A673 (cell line): ENCODE measurements at regions of chr1 and their contacts with region 1.

Region 1: DNA sequence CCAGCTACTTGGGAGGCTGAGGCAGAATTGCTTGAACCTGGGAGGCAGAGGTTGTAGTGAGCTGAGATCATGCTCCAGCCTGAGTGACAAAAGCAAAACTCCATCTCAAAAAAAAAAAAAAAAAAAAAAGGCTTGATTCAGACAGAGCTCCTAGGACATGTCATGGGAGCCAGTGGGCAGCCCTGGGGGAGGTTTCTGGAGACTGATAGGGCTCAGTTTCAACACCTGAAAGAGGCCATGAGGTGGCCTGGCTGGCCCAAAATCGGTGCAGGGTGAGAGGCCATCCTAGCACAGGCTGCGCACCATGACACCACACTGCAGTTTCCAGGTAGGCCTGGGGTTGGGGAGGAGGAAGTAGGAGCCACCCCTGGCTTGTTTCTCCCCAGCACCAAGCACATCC is 39.3 kb downstream of the BMP8A start:
- DNase-seq: no peak
- H3K4me3 ChIP-seq: no peak overlapping the region
- H3K27ac ChIP-seq: no peak overlapping the region
- H3K4me1 ChIP-seq: no peaks in the 10 kb centered on the region
- H3K27me3 ChIP-seq: no peaks in the 10 kb centered on the region
- CTCF ChIP-seq: no peak

Region 2: GRCh38 chr1:39940252-39940651 is 409.5 kb after region 1 on chr1:
- CTCF ChIA-PET with region 1: no interaction called
- POLR2A ChIA-PET with region 1: interaction called, 11 read pairs
- intact Hi-C with region 1: no loop called
- DNase-seq: no peak
- H3K4me3 ChIP-seq: no peak overlapping the region
- H3K27ac ChIP-seq: no peak overlapping the region
- H3K4me1 ChIP-seq: no peaks in the 10 kb centered on the region
- H3K27me3 ChIP-seq: no peaks in the 10 kb centered on the region
- CTCF ChIP-seq: no peak